Activated T-helper 1 cell treated with anti-CD3 and anti-CD28 coated beads, Interleukin-12 subunit alpha, Interleukin-12 subunit beta, Interleukin-2, Interleukin-4 antibody, amounts not matched to agents 30 ng/mL and 10 ng/mL and 1 ng/mL, durations not matched to agents 14 hours and 24 hours and 36 hours (primary cell): ENCODE measurements at regions of chr6 and their contacts with region 1.

Region 1: DNA sequence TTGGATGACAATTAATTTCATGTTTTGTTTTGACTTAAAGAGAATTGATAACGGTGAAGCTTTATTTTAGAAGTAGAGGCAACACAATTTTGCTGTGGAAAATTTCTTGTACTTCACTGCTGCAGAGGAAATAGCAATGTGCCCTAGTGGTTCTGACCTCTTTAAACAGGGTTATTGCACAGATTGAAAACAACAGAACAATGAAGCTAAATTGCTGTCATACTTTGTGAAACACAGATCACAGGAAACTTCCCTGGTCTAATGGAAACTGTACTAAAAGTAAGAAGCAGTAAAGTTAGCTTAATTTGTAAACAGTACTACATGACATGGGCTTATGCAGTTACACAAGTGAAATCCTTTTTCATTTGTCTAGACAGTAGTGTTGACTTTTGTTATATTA is 31.3 kb downstream of the OR2A4 start:
- DNase-seq: no peak
- H3K4me3 Mint-ChIP-seq: no peak overlapping the region
- H3K27ac Mint-ChIP-seq: no peak overlapping the region
- H3K4me1 Mint-ChIP-seq: no peaks in the 10 kb centered on the region
- H3K27me3 Mint-ChIP-seq: peaks cover 2% of the 10 kb centered on the region

Region 2: GRCh38 chr6:131627724-131628682 is 41.9 kb before region 1 on chr6 and contains the start of gene MED23:
- intact Hi-C with region 1: no loop called
- DNase-seq: peak; percentile 92
- H3K4me3 Mint-ChIP-seq: peak within 1 kb of the TSS; percentile 99
- H3K27ac Mint-ChIP-seq: peak within 1 kb of the TSS; percentile 94
- H3K4me1 Mint-ChIP-seq: peaks cover 36% of the 10 kb centered on the region
- H3K27me3 Mint-ChIP-seq: no peaks in the 10 kb centered on the region
- total RNA-seq, gene MED23: 34.0 and 36.3 TPM in 2 replicates

Region 3: GRCh38 chr6:131654326-131654725 is 15.6 kb before region 1 on chr6:
- intact Hi-C with region 1: loop called (anchors 2 kb)
- DNase-seq: no peak
- H3K4me3 Mint-ChIP-seq: no peak overlapping the region
- H3K27ac Mint-ChIP-seq: no peak overlapping the region
- H3K4me1 Mint-ChIP-seq: peaks cover 8% of the 10 kb centered on the region
- H3K27me3 Mint-ChIP-seq: peaks cover 3% of the 10 kb centered on the region